ENCODE measurements at regions of chr10 and their contacts with region 1.

Region 1: GRCh38 chr10:74293686-74294371 is 142.8 kb downstream of the ADK start:
- DNase-seq: no peak
- ATAC-seq: no peak
- H3K4me3 Mint-ChIP-seq: no peak overlapping the region
- H3K27ac Mint-ChIP-seq: no peak overlapping the region
- H3K4me1 Mint-ChIP-seq: peaks cover 37% of the 10 kb centered on the region
- H3K27me3 Mint-ChIP-seq: no peaks in the 10 kb centered on the region
- CTCF ChIP-seq: no peak

Region 2: DNA sequence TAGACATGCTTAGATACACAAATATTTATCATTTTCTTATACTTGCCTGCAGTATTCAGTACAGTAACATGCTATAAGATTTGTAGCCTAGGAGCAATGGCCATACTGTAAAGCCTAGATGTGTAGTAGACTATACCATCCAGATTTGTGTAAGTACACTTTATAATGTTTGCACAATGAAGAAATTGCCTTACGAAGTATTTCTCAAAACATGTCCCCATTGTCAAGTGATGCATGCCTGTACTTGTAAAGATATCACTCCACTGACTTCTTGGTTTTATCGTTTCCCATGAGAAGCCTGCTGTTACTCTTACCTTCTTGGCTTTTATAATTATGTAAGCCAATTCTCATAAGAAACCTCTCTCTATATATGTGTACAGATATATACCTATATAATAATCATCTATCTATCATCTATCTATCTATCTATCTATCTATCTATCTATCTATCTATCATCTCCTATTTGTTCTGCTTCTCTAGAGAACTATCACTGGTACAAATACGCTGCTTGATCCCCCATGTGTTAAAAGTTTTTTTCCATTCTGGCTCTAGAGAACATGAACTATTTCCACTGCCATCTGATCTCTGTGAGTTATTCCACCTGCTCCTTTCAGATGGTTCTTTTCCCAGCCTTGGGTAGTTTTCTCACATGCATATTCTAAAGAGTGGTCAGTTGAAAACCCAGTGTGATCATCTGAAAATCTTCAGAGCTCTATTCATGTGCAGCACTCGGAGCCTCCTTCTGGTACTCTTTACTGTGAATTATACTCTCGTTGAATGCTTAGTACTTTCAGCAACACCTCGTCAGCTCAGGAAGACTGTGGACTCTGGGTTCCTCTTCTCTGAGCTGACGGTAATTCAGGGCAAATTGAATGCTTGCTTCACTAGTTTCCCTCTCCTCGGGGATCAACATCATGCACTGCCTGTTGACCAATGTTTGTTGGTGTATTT is 310.5 kb before region 1 on chr10:
- CTCF ChIA-PET with region 1: no interaction called
- POLR2A ChIA-PET with region 1: no interaction called
- intact Hi-C with region 1: no loop called
- DNase-seq: no peak
- ATAC-seq: peak; percentile 62
- H3K4me3 Mint-ChIP-seq: peak overlapping the region; percentile 40
- H3K27ac Mint-ChIP-seq: no peak overlapping the region
- H3K4me1 Mint-ChIP-seq: peaks cover 26% of the 10 kb centered on the region
- H3K27me3 Mint-ChIP-seq: no peaks in the 10 kb centered on the region
- CTCF ChIP-seq: no peak

Region 3: DNA sequence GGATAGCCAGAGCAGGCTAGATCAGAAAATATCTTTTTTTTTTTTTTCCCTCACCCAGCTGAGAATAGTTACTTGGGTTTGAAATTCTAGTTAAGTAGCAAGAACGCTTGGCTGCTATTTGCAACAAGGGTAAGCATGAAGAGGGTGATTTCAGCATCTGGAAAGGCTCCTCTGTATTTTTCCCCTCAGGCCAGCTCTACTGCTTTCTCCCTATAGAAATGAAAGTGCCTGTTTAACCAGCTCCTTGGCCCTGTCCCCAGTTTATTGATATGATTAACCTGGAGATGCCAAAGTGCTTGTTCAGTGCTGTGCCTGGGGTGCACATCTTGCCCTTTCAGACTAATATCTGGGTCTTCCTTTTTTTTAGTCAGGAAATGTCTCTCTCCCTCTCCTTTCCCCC is 180.3 kb before region 1 on chr10:
- CTCF ChIA-PET with region 1: no interaction called
- POLR2A ChIA-PET with region 1: no interaction called
- intact Hi-C with region 1: no loop called
- DNase-seq: no peak
- ATAC-seq: no peak
- H3K4me3 Mint-ChIP-seq: no peak overlapping the region
- H3K27ac Mint-ChIP-seq: no peak overlapping the region
- H3K4me1 Mint-ChIP-seq: peaks cover 5% of the 10 kb centered on the region
- H3K27me3 Mint-ChIP-seq: no peaks in the 10 kb centered on the region
- CTCF ChIP-seq: no peak

Region 4: GRCh38 chr10:74306227-74306982 is 12.6 kb after region 1 on chr10:
- CTCF ChIA-PET with region 1: no interaction called
- POLR2A ChIA-PET with region 1: no interaction called
- intact Hi-C with region 1: loop called (anchors 2 kb)
- DNase-seq: no peak
- ATAC-seq: no peak
- H3K4me3 Mint-ChIP-seq: no peak overlapping the region
- H3K27ac Mint-ChIP-seq: no peak overlapping the region
- H3K4me1 Mint-ChIP-seq: peaks cover 17% of the 10 kb centered on the region
- H3K27me3 Mint-ChIP-seq: no peaks in the 10 kb centered on the region
- CTCF ChIP-seq: no peak

Region 5: DNA sequence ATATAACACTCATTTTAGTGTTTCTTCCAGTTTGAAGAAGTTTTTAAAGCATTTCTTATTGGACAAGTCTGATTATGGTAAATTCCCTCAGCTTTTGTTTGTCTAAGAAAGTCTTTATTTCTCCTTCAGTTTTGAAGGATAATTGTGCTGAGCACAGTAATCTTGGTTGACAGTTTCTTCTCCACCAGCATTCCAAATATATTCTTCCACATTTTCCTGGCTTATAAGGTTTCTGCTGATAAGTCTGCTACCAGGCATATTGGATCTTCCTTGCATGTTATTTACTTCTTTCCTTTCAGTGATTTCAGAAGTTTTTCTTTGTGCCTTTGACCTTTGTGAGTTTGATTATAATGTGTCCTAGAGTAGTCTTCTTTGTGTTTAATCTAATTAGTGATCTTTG is 67.8 kb after region 1 on chr10:
- CTCF ChIA-PET with region 1: no interaction called
- POLR2A ChIA-PET with region 1: no interaction called
- intact Hi-C with region 1: no loop called
- DNase-seq: no peak
- ATAC-seq: no peak
- H3K4me3 Mint-ChIP-seq: no peak overlapping the region
- H3K27ac Mint-ChIP-seq: no peak overlapping the region
- H3K4me1 Mint-ChIP-seq: peaks cover 5% of the 10 kb centered on the region
- H3K27me3 Mint-ChIP-seq: no peaks in the 10 kb centered on the region
- CTCF ChIP-seq: no peak

Region 6: GRCh38 chr10:74432841-74433594 is 139.2 kb after region 1 on chr10:
- CTCF ChIA-PET with region 1: no interaction called
- POLR2A ChIA-PET with region 1: no interaction called
- intact Hi-C with region 1: no loop called
- DNase-seq: no peak
- ATAC-seq: no peak
- H3K4me3 Mint-ChIP-seq: no peak overlapping the region
- H3K27ac Mint-ChIP-seq: no peak overlapping the region
- H3K4me1 Mint-ChIP-seq: no peaks in the 10 kb centered on the region
- H3K27me3 Mint-ChIP-seq: no peaks in the 10 kb centered on the region
- CTCF ChIP-seq: no peak

Measured in activated B cell treated with CpG ODN at 0.5 μM for 24 hours (primary cell).